ENCODE measurements at regions of chr4 and their contacts with region 1.

Region 1: GRCh38 chr4:102868781-102869568 is at the start of gene CISD2:
- DNase-seq: peak; percentile 92 to 95 (median 94)
- H3K4me3 ChIP-seq: peak within 1 kb of the TSS; percentile 45 to 80 (median 74)
- H3K27ac ChIP-seq: peak within 1 kb of the TSS; percentile 84 to 100 (median 97)
- H3K4me1 ChIP-seq: peaks cover 0 to 39% of the 10 kb centered on the region in 2 donors
- H3K27me3 ChIP-seq: no peaks in the 10 kb centered on the region
- CTCF ChIP-seq: peak in 4 of 6 experiments; percentile 3 to 25 (median 20)
- POLR2A ChIP-seq: peak; percentile 39 to 80
- total RNA-seq, gene CISD2: 20.5 to 50.4 (median 34.4) TPM

Region 2: GRCh38 chr4:102826890-102827673 is 41.9 kb before region 1 on chr4 and contains the start of gene UBE2D3:
- intact Hi-C with region 1: loop called in 1 of 2 experiments (anchors 5 kb)
- DNase-seq: peak; percentile 92 to 97 (median 94)
- H3K4me3 ChIP-seq: peak within 1 kb of the TSS; percentile 83 to 95 (median 88)
- H3K27ac ChIP-seq: peak within 1 kb of the TSS; percentile 98 to 100 (median 100)
- H3K4me1 ChIP-seq: peaks cover 25 to 34% of the 10 kb centered on the region in 2 donors
- H3K27me3 ChIP-seq: no peaks in the 10 kb centered on the region
- CTCF ChIP-seq: no peak
- POLR2A ChIP-seq: peak; percentile 67 to 91
- total RNA-seq, gene UBE2D3: 318 to 523 (median 411) TPM

Measured in adrenal gland (tissue), 19 donors.